ENCODE measurements at regions of chr12 and their contacts with region 1.

Region 1: GRCh38 chr12:125183187-125184067 is 118.2 kb downstream of the AACS start:
- DNase-seq: peak; percentile 58 to 87 (median 71)
- ATAC-seq: peak; percentile 51 to 82 (median 72)
- H3K4me3 ChIP-seq: peak overlapping the region in 1 of 12 donors; percentile 25
- H3K27ac ChIP-seq: no peak overlapping the region
- H3K4me1 ChIP-seq: peaks cover 0 to 35% (median 10%) of the 10 kb centered on the region in 12 donors
- H3K27me3 ChIP-seq: peaks cover 0 to 54% (median 15%) of the 10 kb centered on the region in 9 donors
- CTCF ChIP-seq: peak; percentile 97 to 100 (median 98)
- POLR2A ChIP-seq: no peak

Region 2: DNA sequence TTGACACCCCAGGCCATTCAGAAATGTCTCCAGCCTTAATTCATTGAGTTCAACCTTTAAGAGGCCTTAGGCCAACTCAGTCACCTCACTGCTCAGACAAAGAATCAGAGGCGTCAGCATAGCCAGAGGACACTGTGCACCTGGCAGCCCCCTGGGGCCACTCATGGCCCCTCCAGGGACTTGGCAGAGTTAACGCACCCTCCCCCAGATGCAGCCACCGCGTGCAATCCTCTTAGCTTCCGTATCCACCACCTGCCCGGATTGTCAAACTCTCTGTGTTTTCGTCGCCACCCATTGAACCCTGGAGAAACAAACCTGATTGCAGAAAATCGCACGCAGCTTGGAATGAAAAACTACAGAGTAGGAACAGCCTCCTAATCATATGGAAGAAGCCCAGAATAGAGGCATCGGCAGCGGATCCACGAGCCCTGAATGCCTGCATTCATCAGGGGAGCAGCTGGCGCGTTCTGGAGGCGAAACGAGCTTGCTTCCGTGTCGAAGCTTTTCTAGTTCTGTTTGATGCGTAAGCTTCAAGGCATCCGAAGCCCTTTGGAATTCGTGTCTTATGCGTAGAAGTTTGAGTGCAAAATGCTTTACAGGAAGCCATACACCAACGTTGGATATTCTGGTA is 167.6 kb before region 1 on chr12:
- intact Hi-C with region 1: no loop called
- DNase-seq: no peak
- ATAC-seq: no peak
- H3K4me3 ChIP-seq: no peak overlapping the region
- H3K27ac ChIP-seq: no peak overlapping the region
- H3K4me1 ChIP-seq: no peaks in the 10 kb centered on the region
- H3K27me3 ChIP-seq: no peaks in the 10 kb centered on the region
- CTCF ChIP-seq: no peak
- POLR2A ChIP-seq: no peak

Region 3: DNA sequence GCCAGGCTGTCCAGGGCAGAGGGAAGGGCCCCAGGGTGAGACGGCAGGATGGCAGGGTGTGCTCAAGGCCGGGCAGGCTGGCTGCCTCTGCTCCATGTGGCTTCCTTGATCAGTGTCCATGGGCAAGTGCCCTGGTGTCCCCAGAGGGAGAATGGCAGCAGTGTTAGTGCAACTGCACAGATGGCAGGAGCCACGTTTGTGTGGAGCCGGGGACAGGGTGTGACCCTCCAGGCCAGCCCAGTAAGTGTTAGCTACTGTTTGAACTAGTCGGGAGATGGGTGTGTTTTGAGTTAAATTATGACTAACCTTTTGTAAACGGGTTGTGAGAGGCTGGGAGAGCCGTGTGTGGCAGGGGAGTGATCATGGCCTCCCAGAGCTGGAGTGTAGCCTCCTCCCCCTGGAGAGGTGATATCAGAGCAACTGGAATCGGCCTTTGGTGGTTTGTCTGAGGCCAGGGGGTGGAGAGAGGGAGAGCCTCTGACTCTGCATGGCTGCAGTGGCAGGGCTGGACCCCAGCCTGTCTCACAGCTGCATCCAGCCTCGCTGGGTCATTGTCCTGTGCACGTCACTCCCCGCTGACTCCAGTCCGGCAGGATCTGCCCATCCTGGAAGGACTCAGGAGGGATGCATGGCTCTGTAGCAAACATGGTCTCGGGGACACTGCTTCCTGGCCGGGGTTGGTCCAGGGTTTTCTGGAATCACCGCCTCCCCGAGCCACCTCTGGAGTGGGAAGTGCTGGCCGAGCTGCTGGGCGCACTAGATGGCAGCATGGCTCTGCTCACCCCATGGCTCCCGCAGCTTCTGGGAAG is 90.4 kb before region 1 on chr12:
- intact Hi-C with region 1: loop called in 1 of 10 experiments (anchors 10 kb)
- DNase-seq: peak in 3 of 5 donors; percentile 28 to 78 (median 77)
- ATAC-seq: peak; percentile 48 to 84 (median 78)
- H3K4me3 ChIP-seq: no peak overlapping the region
- H3K27ac ChIP-seq: peak overlapping the region in 5 of 12 donors; percentile 17 to 54 (median 27)
- H3K4me1 ChIP-seq: peaks cover 0 to 7% (median 0%) of the 10 kb centered on the region in 12 donors
- H3K27me3 ChIP-seq: no peaks in the 10 kb centered on the region
- CTCF ChIP-seq: peak in 7 of 12 donors; percentile 12 to 39 (median 26)
- POLR2A ChIP-seq: no peak

Region 4: GRCh38 chr12:125100551-125101434 is 82.6 kb before region 1 on chr12:
- intact Hi-C with region 1: loop called in 2 of 10 experiments (anchors 10 kb)
- DNase-seq: no peak
- ATAC-seq: no peak
- H3K4me3 ChIP-seq: no peak overlapping the region
- H3K27ac ChIP-seq: no peak overlapping the region
- H3K4me1 ChIP-seq: peaks cover 0 to 15% (median 2%) of the 10 kb centered on the region in 12 donors
- H3K27me3 ChIP-seq: no peaks in the 10 kb centered on the region
- CTCF ChIP-seq: no peak
- POLR2A ChIP-seq: no peak

Region 5: DNA sequence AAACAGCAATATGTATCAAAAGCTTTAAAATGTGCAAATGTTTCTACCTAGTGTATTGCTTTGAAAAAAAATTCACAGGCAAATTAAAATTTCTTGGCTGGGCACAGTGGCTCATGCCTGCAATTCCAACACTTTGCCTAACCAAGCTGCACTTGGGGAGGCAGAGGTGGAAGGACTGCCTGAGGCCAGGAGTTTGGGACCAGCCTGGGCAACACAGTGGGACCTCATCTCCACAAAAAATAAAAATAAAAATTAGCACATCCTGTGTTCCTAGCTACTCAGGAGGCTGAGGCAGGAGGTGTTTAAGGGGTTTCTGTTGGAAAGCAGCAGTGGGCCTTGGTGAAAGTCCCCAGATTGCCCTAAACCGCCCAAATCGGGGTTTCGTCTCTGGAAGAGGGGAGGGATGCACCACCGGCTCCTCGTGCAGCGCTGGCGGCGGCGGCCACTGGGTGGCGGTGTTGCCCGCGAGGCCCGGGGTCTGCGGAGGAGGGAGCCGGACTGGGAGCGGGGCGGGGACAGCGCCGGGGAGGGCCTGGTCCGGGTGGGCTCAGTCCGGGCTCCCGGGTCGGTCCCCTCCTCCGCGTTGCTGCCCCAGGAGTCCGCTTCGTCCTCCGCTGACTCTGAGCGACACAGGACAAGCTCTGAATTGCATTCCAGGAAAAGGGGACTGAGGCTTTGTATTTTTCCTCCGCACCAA is 147.4 kb after region 1 on chr12:
- intact Hi-C with region 1: loop called in 1 of 10 experiments (anchors 5 kb)
- DNase-seq: peak; percentile 54 to 85 (median 61)
- ATAC-seq: peak; percentile 51 to 98 (median 90)
- H3K4me3 ChIP-seq: peak overlapping the region; percentile 11 to 59 (median 44)
- H3K27ac ChIP-seq: peak overlapping the region in 1 of 12 donors; percentile 32
- H3K4me1 ChIP-seq: peaks cover 0 to 11% (median 3%) of the 10 kb centered on the region in 12 donors
- H3K27me3 ChIP-seq: peaks cover 0 to 47% (median 17%) of the 10 kb centered on the region in 9 donors
- CTCF ChIP-seq: peak; percentile 70 to 95 (median 91)
- POLR2A ChIP-seq: no peak

Region 6: DNA sequence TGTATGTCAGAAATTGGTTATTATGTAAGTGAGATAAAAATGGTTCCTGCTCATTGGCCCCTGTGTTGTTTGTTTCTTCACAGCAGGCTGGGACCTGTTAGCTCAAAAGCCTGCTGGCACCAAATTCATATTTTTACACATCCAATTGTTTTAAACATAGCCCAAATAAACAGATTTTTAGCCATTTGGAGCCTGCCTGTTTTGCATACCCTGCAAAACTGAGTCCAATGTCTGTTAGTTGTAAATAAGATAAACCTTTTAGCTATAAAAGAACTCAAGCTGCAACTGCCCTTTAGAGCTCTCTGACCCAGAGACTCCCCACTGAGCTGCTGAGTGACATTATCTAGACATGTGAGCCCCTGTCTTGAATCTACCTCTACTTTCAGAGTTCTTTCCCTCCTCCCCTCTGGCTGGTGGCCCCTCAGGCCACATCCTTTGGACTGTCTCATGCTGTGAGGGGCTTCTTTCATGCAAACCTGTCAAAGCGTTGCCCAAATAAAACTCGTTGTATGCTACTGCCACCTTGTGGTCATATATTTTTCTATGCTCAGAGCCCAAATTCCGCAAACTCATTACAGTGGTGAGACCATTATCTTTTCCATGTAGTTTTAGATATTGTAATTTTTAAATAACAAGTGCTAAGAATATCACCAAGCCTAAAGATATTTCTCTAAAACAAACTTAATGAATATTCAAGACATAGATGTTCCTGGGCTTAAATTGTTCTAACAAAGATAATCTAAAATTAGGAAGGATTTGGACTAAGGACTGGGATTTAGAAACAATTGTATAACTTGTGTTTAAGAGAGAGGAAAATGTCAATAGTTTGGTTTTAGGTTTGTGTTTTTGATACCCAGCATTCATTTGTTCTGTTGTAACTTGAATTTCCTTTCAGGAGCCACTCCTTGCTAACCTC is 219.7 kb after region 1 on chr12:
- intact Hi-C with region 1: loop called (anchors 2 to 10 kb)
- DNase-seq: no peak
- ATAC-seq: no peak
- H3K4me3 ChIP-seq: no peak overlapping the region
- H3K27ac ChIP-seq: no peak overlapping the region
- H3K4me1 ChIP-seq: no peaks in the 10 kb centered on the region
- H3K27me3 ChIP-seq: peaks cover 0 to 25% (median 0%) of the 10 kb centered on the region in 9 donors
- CTCF ChIP-seq: peak; percentile 30 to 66 (median 58)
- POLR2A ChIP-seq: no peak

Region 7: DNA sequence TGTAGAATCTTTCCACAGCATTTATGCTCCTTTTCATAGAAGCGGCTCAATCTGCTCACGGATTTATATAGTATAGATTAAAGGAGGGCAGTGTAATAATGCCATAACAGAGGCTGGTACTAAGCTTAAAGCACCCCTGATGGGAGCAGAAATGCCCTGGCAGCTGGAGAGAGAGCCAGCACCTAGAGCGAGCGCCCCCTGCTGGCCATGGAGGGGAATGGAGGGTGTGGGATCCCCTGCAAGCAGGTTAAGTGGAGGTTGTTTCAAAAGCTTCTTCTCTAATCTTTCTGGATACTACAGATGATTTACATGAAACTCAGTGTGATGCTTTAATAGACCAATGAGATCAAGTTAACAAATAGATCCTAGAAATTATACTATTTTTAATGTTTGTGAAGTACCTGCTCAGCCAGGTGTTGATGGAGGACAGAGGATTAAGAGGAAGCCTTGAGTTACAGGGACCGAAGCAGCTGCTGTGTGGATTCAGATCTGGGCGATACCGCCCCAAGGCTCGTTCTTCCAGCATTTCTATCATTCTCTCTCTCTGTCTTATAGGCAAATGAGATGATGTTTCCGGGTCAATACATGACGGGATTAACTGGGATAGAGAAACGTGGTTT is 1564.2 kb after region 1 on chr12:
- intact Hi-C with region 1: loop called in 7 of 10 experiments (anchors 5 to 10 kb)
- DNase-seq: peak in 4 of 5 donors; percentile 15 to 73 (median 32)
- ATAC-seq: peak in 1 of 4 donors; percentile 42
- H3K4me3 ChIP-seq: no peak overlapping the region
- H3K27ac ChIP-seq: no peak overlapping the region
- H3K4me1 ChIP-seq: no peaks in the 10 kb centered on the region
- H3K27me3 ChIP-seq: peaks cover 0 to 10% (median 0%) of the 10 kb centered on the region in 9 donors
- CTCF ChIP-seq: peak; percentile 75 to 95 (median 87)
- POLR2A ChIP-seq: no peak

Region 8: GRCh38 chr12:126874427-126875026 is 1691.1 kb after region 1 on chr12:
- intact Hi-C with region 1: loop called (anchors 1 to 10 kb)
- DNase-seq: peak; percentile 31 to 69 (median 41)
- ATAC-seq: peak in 3 of 4 donors; percentile 66 to 75 (median 71)
- H3K4me3 ChIP-seq: no peak overlapping the region
- H3K27ac ChIP-seq: no peak overlapping the region
- H3K4me1 ChIP-seq: no peaks in the 10 kb centered on the region
- H3K27me3 ChIP-seq: peaks cover 0 to 3% (median 0%) of the 10 kb centered on the region in 9 donors
- CTCF ChIP-seq: peak; percentile 62 to 90 (median 84)
- POLR2A ChIP-seq: no peak